Activated CD4-positive, alpha-beta T cell treated with anti-CD3 and anti-CD28 coated beads, Interleukin-2, amount 10 ng/mL, durations not matched to agents 7 days and 5 days (primary cell): ENCODE measurements at regions of chr22 and their contacts with region 1.

Region 1: DNA sequence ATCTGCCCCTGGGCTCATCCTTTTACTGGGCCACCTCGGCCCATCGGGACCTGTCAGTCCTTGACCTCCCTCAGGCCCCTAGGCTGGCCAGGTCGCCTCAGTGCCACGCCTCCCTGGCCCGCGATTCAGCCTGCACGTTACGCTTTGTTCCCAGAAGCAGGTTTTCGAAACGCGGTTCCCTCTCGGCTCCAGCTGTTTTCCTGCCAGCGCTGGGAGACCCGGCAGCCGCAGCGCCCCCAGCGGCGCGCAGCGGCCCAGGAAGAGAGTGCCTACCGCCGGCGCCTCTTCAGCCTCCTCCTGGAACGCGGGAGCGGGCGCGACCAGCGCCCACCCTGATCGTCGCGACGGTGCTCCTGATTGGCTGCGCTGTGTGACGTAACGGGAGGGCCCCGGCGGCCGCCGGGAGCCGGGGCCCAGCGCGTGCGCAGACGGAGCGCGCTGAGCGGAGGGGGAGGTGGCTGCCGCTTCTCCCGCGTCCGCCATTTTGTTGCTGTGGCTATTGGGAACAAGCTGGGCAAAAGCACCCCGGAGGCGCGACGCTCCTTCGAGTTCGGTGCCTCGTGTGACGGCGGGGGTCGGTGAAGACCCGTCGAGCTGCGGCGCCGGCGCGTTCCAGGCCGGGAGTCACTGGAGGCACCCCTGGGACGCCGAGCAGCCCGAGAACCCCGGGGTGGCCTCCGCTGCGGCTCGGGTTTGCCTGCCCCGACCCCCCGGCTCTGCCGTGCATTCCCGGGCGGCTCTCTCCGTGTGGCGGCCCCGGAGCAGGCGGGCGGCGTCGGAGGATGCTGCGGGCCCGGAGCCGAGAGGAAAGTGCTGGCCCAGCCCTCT is at the start of gene CRKL:
- DNase-seq: peak; percentile 96
- H3K4me3 Mint-ChIP-seq: peak within 1 kb of the TSS; percentile 99
- H3K27ac Mint-ChIP-seq: peak within 1 kb of the TSS; percentile 94
- H3K4me1 Mint-ChIP-seq: peaks cover 37% of the 10 kb centered on the region
- H3K27me3 Mint-ChIP-seq: no peaks in the 10 kb centered on the region
- total RNA-seq, gene CRKL: 82.2 to 87.2 TPM

Region 2: GRCh38 chr22:20904008-20904979 is 12.9 kb before region 1 on chr22:
- CTCF ChIA-PET with region 1: interaction called, 22 read pairs
- POLR2A ChIA-PET with region 1: no interaction called
- DNase-seq: no peak
- H3K4me3 Mint-ChIP-seq: no peak overlapping the region
- H3K27ac Mint-ChIP-seq: no peak overlapping the region
- H3K4me1 Mint-ChIP-seq: peaks cover 5% of the 10 kb centered on the region
- H3K27me3 Mint-ChIP-seq: peaks cover 11% of the 10 kb centered on the region

Region 3: GRCh38 chr22:20937031-20937793 is 20.0 kb after region 1 on chr22:
- CTCF ChIA-PET with region 1: interaction called, 12 read pairs
- POLR2A ChIA-PET with region 1: no interaction called
- DNase-seq: no peak
- H3K4me3 Mint-ChIP-seq: no peak overlapping the region
- H3K27ac Mint-ChIP-seq: no peak overlapping the region
- H3K4me1 Mint-ChIP-seq: peaks cover 42% of the 10 kb centered on the region
- H3K27me3 Mint-ChIP-seq: no peaks in the 10 kb centered on the region